PC-9 (cell line): ENCODE measurements at regions of chr2 and their contacts with region 1.

Region 1: DNA sequence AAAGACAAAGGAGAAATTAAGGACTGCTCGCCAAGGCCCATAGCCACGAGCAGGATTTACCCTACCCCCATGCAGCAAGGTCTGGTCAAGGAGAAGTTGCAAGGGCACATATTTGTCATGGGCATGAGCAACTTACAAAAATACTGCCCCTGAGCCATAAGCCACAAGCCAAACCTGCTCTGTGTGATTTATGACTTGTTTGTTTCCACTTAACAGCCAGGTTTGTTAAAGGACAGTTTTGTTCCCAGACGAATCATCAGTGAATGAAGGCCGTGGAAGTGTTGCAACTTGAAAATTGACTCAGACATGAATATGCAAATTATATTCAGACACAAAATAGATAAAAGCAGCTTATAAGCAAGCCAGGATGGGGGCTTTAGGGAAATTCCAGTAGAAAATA is 31.3 kb upstream of the EVA1A start:
- DNase-seq: peak; percentile 65 to 99
- H3K4me3 ChIP-seq: no peak overlapping the region
- H3K27ac ChIP-seq: peak overlapping the region; percentile 84
- H3K4me1 ChIP-seq: peaks cover 59% of the 10 kb centered on the region
- H3K27me3 ChIP-seq: no peaks in the 10 kb centered on the region
- CTCF ChIP-seq: no peak

Region 2: DNA sequence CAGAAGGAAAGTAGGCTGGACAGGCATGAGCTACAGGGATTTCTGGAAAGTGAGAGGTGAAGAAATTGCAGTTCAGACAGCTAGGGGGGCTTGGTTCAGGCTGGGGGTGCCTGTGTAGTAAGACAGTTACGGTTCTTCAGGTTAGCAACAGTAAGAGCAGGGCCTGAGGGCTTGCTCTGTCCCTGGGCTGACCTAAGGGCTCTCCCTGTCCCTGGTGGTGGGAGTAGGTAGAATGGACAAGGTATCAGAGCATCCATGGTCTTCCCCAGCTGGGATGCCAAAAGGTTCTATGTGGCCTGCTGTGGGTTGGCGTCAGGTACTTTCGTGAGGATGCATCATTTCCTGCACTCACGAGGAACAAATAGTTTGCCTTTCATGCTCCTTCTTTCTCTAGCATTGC is 358.1 kb before region 1 on chr2:
- CTCF ChIA-PET with region 1: no interaction called
- POLR2A ChIA-PET with region 1: interaction called, 10 read pairs
- intact Hi-C with region 1: no loop called
- DNase-seq: no peak
- H3K4me3 ChIP-seq: no peak overlapping the region
- H3K27ac ChIP-seq: no peak overlapping the region
- H3K4me1 ChIP-seq: peaks cover 13% of the 10 kb centered on the region
- H3K27me3 ChIP-seq: no peaks in the 10 kb centered on the region
- CTCF ChIP-seq: no peak

Region 3: GRCh38 chr2:75655861-75656260 is 63.8 kb after region 1 on chr2:
- CTCF ChIA-PET with region 1: no interaction called
- POLR2A ChIA-PET with region 1: interaction called, 10 read pairs
- intact Hi-C with region 1: no loop called
- DNase-seq: no peak
- H3K4me3 ChIP-seq: no peak overlapping the region
- H3K27ac ChIP-seq: no peak overlapping the region
- H3K4me1 ChIP-seq: no peaks in the 10 kb centered on the region
- H3K27me3 ChIP-seq: no peaks in the 10 kb centered on the region
- CTCF ChIP-seq: no peak